Panc1 (cell line): ENCODE measurements at regions of chr16 and their contacts with region 1.

Region 1: GRCh38 chr16:69112285-69113129 is 7.1 kb downstream of the HAS3 start:
- DNase-seq: no peak
- ATAC-seq: peak; percentile 87
- H3K4me3 ChIP-seq: no peak overlapping the region
- H3K27ac ChIP-seq: no peak overlapping the region
- H3K4me1 ChIP-seq: peaks cover 11% of the 10 kb centered on the region
- H3K27me3 ChIP-seq: no peaks in the 10 kb centered on the region
- CTCF ChIP-seq: peak; percentile 90

Region 2: DNA sequence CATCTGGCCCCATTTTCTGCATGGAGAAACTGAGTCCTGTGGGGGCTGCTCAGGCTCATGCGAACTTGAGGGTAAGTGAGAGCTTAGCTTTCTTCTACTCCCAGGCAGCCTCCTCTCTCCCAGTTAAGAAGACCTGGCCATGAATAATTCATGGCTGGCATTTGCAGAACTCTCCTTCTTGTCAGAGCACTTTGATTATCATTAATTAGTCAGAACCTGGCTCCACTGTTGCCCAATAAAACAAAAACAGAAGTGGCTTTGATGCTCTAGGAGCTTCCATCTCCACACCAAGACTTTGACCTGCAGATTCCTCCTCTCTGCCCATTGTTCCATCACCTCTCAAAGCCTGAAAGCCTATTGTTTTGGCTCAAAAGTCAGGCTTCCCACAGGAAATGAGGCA is 512.9 kb before region 1 on chr16:
- CTCF ChIA-PET with region 1: interaction called, 12 read pairs
- POLR2A ChIA-PET with region 1: no interaction called
- in situ Hi-C with region 1: no loop called
- intact Hi-C with region 1: no loop called
- DNase-seq: no peak
- ATAC-seq: no peak
- H3K4me3 ChIP-seq: no peak overlapping the region
- H3K27ac ChIP-seq: no peak overlapping the region
- H3K4me1 ChIP-seq: no peaks in the 10 kb centered on the region
- H3K27me3 ChIP-seq: no peaks in the 10 kb centered on the region
- CTCF ChIP-seq: no peak

Region 3: GRCh38 chr16:68776821-68777351 is 335.6 kb before region 1 on chr16:
- CTCF ChIA-PET with region 1: no interaction called
- POLR2A ChIA-PET with region 1: no interaction called
- in situ Hi-C with region 1: no loop called
- intact Hi-C with region 1: no loop called
- DNase-seq: no peak
- ATAC-seq: no peak
- H3K4me3 ChIP-seq: no peak overlapping the region
- H3K27ac ChIP-seq: no peak overlapping the region
- H3K4me1 ChIP-seq: peaks cover 3% of the 10 kb centered on the region; the same call in 1 of the 2 replicates
- H3K27me3 ChIP-seq: no peaks in the 10 kb centered on the region
- CTCF ChIP-seq: no peak

Region 4: DNA sequence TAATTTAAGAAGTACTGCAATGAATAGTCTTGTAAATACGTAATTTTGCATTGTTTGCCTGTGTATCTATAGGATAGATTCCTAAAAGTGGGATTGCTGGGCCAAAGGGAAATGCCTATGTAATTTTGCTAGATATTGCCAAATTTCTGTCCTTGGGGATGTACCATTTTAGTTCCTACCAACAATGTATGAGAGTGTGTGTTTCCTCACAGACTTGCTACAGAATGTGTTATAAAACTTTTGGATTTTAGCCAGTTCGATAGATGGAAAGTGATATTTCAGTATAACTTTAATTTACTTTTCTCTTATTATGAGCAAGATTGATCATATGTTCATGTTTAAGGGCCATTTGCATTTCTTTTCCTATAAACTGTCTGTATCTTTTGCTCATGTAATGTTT is 260.9 kb before region 1 on chr16:
- CTCF ChIA-PET with region 1: interaction called, 9 read pairs
- POLR2A ChIA-PET with region 1: no interaction called
- in situ Hi-C with region 1: no loop called
- intact Hi-C with region 1: loop called (anchors 10 kb)
- DNase-seq: no peak
- ATAC-seq: no peak
- H3K4me3 ChIP-seq: no peak overlapping the region
- H3K27ac ChIP-seq: no peak overlapping the region
- H3K4me1 ChIP-seq: no peaks in the 10 kb centered on the region
- H3K27me3 ChIP-seq: no peaks in the 10 kb centered on the region
- CTCF ChIP-seq: no peak

Region 5: GRCh38 chr16:68985855-68986254 is 126.7 kb before region 1 on chr16:
- CTCF ChIA-PET with region 1: no interaction called
- POLR2A ChIA-PET with region 1: no interaction called
- in situ Hi-C with region 1: no loop called
- intact Hi-C with region 1: no loop called
- DNase-seq: no peak
- ATAC-seq: no peak
- H3K4me3 ChIP-seq: no peak overlapping the region
- H3K27ac ChIP-seq: no peak overlapping the region
- H3K4me1 ChIP-seq: no peaks in the 10 kb centered on the region
- H3K27me3 ChIP-seq: no peaks in the 10 kb centered on the region
- CTCF ChIP-seq: no peak

Region 6: GRCh38 chr16:69132424-69133252 is 20.1 kb after region 1 on chr16 and contains the starts of genes CHTF8 and UTP4:
- CTCF ChIA-PET with region 1: interaction called, 16 read pairs
- POLR2A ChIA-PET with region 1: no interaction called
- in situ Hi-C with region 1: no loop called
- intact Hi-C with region 1: no loop called
- DNase-seq: no peak
- ATAC-seq: peak; percentile 99
- H3K4me3 ChIP-seq: peak within 1 kb of the TSS; percentile 61 to 92
- H3K27ac ChIP-seq: peak within 1 kb of the TSS; percentile 89
- H3K4me1 ChIP-seq: peaks cover 17% of the 10 kb centered on the region
- H3K27me3 ChIP-seq: no peaks in the 10 kb centered on the region
- CTCF ChIP-seq: no peak
- total RNA-seq, gene CHTF8: 116 TPM
- total RNA-seq, gene UTP4: 61.7 TPM

Region 7: GRCh38 chr16:69150146-69150865 is 37.8 kb after region 1 on chr16:
- CTCF ChIA-PET with region 1: no interaction called
- POLR2A ChIA-PET with region 1: no interaction called
- in situ Hi-C with region 1: no loop called
- intact Hi-C with region 1: no loop called
- DNase-seq: no peak
- ATAC-seq: peak; percentile 90
- H3K4me3 ChIP-seq: no peak overlapping the region
- H3K27ac ChIP-seq: no peak overlapping the region
- H3K4me1 ChIP-seq: no peaks in the 10 kb centered on the region
- H3K27me3 ChIP-seq: no peaks in the 10 kb centered on the region
- CTCF ChIP-seq: peak; percentile 73